ENCODE measurements at regions of chr13 and their contacts with region 1.

Region 1: GRCh38 chr13:93953856-93954255 is 525.6 kb downstream of the DCT start:
- DNase-seq: no peak
- H3K4me3 Mint-ChIP-seq: no peak overlapping the region
- H3K27ac Mint-ChIP-seq: no peak overlapping the region
- H3K4me1 Mint-ChIP-seq: no peaks in the 10 kb centered on the region
- H3K27me3 Mint-ChIP-seq: no peaks in the 10 kb centered on the region

Region 2: GRCh38 chr13:93882086-93882651 is 71.7 kb before region 1 on chr13:
- CTCF ChIA-PET with region 1: no interaction called
- intact Hi-C with region 1: no loop called
- DNase-seq: no peak
- H3K4me3 Mint-ChIP-seq: no peak overlapping the region
- H3K27ac Mint-ChIP-seq: no peak overlapping the region
- H3K4me1 Mint-ChIP-seq: no peaks in the 10 kb centered on the region
- H3K27me3 Mint-ChIP-seq: no peaks in the 10 kb centered on the region

Region 3: GRCh38 chr13:93996481-93996880 is 42.6 kb after region 1 on chr13:
- CTCF ChIA-PET with region 1: no interaction called
- intact Hi-C with region 1: loop called (anchors 1 kb)
- DNase-seq: no peak
- H3K4me3 Mint-ChIP-seq: no peak overlapping the region
- H3K27ac Mint-ChIP-seq: no peak overlapping the region
- H3K4me1 Mint-ChIP-seq: no peaks in the 10 kb centered on the region
- H3K27me3 Mint-ChIP-seq: peaks cover 10% of the 10 kb centered on the region

Region 4: GRCh38 chr13:94020833-94021232 is 67.0 kb after region 1 on chr13:
- CTCF ChIA-PET with region 1: no interaction called
- intact Hi-C with region 1: no loop called
- DNase-seq: no peak
- H3K4me3 Mint-ChIP-seq: no peak overlapping the region
- H3K27ac Mint-ChIP-seq: no peak overlapping the region
- H3K4me1 Mint-ChIP-seq: peaks cover 3% of the 10 kb centered on the region
- H3K27me3 Mint-ChIP-seq: peaks cover 30% of the 10 kb centered on the region